ENCODE measurements at regions of chr2 and their contacts with region 1.

Region 1: DNA sequence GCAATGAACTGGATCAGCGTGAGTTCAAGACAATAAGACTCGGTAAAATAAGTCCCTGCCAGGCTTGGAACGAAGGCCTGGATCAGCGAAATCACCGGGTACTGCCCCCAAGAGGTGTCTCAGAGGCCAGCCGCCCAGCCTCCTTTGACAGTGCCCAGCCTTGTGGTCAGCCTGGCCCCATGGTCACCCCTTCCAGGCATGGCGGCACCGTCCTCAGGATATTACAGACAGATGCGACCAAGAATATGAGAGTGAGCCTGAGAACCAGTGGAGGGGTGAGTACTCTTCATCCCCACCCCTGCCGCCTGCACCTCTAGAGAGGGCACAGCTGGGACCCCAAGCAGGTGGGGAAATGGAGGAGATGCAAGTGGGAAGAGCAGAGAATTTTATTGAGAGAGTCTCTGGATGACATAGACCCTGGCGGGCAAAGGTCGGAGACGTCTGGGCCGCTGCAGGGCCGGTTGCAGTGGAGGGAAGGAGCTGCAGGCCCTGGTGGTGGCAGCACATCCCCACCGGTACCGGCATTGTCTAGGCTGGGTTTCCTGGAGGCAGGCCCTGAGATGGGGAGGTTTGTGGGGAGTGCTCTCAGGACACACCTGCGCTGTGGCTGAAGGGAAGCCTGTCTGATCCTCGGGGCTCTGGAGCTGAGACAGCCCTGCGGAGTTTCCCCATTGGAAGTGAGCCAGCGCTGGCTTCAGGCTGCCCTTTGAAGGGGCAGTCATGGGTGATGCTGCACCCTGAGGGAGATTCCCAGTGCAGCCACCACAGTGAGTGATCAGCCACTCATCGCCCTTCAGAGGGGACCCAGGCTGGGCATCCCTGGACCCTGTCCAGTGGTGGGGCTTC is 190.0 kb downstream of the SEPTIN10 start:
- DNase-seq: peak in 1 of 2 donors; percentile 26
- ATAC-seq: no peak
- H3K4me3 ChIP-seq: no peak overlapping the region
- H3K27ac ChIP-seq: peak overlapping the region in 3 of 4 donors; percentile 56 to 85 (median 78)
- H3K4me1 ChIP-seq: peaks cover 24 to 37% of the 10 kb centered on the region in 2 donors
- H3K27me3 ChIP-seq: no peaks in the 10 kb centered on the region
- CTCF ChIP-seq: no peak
- POLR2A ChIP-seq: no peak

Region 2: DNA sequence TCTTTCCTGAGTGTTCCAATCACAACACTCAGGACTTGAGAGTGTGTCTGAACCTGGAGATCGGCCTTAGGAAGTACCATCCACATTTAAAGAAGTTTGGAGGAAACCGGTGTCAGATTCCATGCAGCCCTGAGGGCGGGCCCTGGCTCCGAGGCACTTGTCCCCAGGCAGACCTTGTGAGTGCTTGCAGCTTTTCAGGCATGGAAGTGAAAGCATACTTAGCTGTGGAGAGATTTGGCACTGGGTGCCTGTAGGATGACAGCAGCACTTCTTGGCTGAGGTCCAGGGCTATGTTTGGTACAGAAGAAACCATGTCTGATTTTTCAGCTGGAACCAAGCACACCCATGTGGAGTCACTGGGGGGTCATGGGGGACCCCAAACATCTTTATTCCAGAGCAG is 40.8 kb before region 1 on chr2:
- in situ Hi-C with region 1: no loop called
- intact Hi-C with region 1: loop called (anchors 1 kb)
- DNase-seq: peak; percentile 83
- ATAC-seq: peak; percentile 74 to 79
- H3K4me3 ChIP-seq: no peak overlapping the region
- H3K27ac ChIP-seq: peak overlapping the region; percentile 67 to 72 (median 70)
- H3K4me1 ChIP-seq: peaks cover 36 to 52% of the 10 kb centered on the region in 2 donors
- H3K27me3 ChIP-seq: no peaks in the 10 kb centered on the region
- CTCF ChIP-seq: no peak
- POLR2A ChIP-seq: no peak

Region 3: DNA sequence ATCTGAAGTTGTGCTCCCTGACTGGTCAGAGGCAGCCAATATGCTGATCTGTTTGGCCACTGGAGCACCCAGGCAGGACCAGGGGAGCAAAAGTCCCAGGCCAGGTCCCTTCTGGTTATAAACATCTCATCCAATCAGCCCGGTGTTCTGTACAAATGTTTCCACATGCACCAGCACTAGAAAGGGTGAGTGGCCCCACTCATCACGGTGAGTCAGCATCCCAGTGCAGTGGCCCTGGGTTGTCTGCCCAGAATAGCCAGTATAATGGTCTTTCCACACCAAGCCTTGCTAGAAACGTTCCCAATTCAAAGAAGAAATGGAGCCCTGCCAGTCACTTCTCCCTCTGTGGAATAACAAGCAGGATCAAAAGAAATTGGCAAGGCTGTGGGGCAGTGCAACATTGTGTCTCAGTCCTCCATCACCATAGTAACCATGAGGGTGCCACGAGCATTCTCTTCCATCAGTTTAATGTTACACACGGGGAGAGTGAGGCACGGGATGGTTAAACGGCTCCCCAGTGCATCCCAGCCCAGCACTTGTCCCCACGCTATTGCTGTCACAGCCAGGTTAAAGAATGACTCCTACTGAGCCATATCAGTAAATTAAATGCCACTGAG is 15.1 kb after region 1 on chr2:
- in situ Hi-C with region 1: no loop called
- intact Hi-C with region 1: loop called (anchors 2 kb)
- DNase-seq: peak; percentile 80
- ATAC-seq: peak; percentile 62 to 73
- H3K4me3 ChIP-seq: no peak overlapping the region
- H3K27ac ChIP-seq: peak overlapping the region; percentile 68 to 86 (median 84)
- H3K4me1 ChIP-seq: peaks cover 45 to 46% of the 10 kb centered on the region in 2 donors
- H3K27me3 ChIP-seq: no peaks in the 10 kb centered on the region
- CTCF ChIP-seq: no peak
- POLR2A ChIP-seq: peak in 1 of 2 donors; percentile 23

Region 4: DNA sequence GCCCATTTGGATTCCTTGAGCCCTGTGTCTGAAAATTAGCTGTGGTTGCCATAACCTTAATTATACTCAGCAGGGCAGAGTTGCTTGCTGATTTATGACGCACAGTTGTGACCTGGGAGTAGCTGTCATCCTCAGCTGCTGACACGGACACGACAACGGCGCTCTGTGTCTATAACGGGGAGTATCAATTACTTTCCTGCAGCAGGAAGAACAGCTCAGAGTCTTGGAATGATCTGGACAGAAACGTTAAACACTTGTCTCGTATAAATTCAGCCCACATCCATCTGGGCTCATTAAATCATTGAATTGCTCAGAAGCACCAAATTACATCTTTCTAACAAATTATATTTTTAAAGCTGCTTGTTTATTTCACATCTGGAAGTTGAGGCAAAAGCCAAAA is 73.7 kb after region 1 on chr2:
- in situ Hi-C with region 1: no loop called
- intact Hi-C with region 1: loop called (anchors 2 kb)
- DNase-seq: peak; percentile 72 to 80
- ATAC-seq: peak; percentile 68 to 91
- H3K4me3 ChIP-seq: no peak overlapping the region
- H3K27ac ChIP-seq: peak overlapping the region; percentile 46 to 83 (median 70)
- H3K4me1 ChIP-seq: peaks cover 33 to 35% of the 10 kb centered on the region in 2 donors
- H3K27me3 ChIP-seq: no peaks in the 10 kb centered on the region
- CTCF ChIP-seq: no peak
- POLR2A ChIP-seq: no peak

Region 5: GRCh38 chr2:109660046-109660860 is 236.5 kb after region 1 on chr2:
- in situ Hi-C with region 1: no loop called
- intact Hi-C with region 1: no loop called
- DNase-seq: no peak
- ATAC-seq: no peak
- H3K4me3 ChIP-seq: no peak overlapping the region
- H3K27ac ChIP-seq: no peak overlapping the region
- H3K4me1 ChIP-seq: peaks cover 4 to 6% of the 10 kb centered on the region in 2 donors
- H3K27me3 ChIP-seq: no peaks in the 10 kb centered on the region
- CTCF ChIP-seq: no peak
- POLR2A ChIP-seq: no peak

Measured in gastrocnemius medialis (tissue), 4 donors.